ENCODE measurements at regions of chr17 and their contacts with region 1.

Region 1: GRCh38 chr17:76397687-76398487 is 13.5 kb downstream of the SPHK1 start:
- DNase-seq: peak; percentile 85
- ATAC-seq: peak; percentile 95
- H3K4me3 ChIP-seq: no peak overlapping the region
- H3K4me3 Mint-ChIP-seq: no peak overlapping the region
- H3K27ac ChIP-seq: no peak overlapping the region
- H3K27ac Mint-ChIP-seq: no peak overlapping the region
- H3K4me1 ChIP-seq: no peaks in the 10 kb centered on the region
- H3K4me1 Mint-ChIP-seq: no peaks in the 10 kb centered on the region
- H3K27me3 ChIP-seq: no peaks in the 10 kb centered on the region
- H3K27me3 Mint-ChIP-seq: no peaks in the 10 kb centered on the region
- CTCF ChIP-seq: peak; percentile 97

Region 2: GRCh38 chr17:76331083-76331482 is 66.8 kb before region 1 on chr17:
- CTCF ChIA-PET with region 1: interaction called, 10 read pairs
- POLR2A ChIA-PET with region 1: no interaction called
- intact Hi-C with region 1: no loop called
- DNase-seq: no peak
- ATAC-seq: no peak
- H3K4me3 ChIP-seq: no peak overlapping the region
- H3K4me3 Mint-ChIP-seq: no peak overlapping the region
- H3K27ac ChIP-seq: no peak overlapping the region
- H3K27ac Mint-ChIP-seq: no peak overlapping the region
- H3K4me1 ChIP-seq: no peaks in the 10 kb centered on the region
- H3K4me1 Mint-ChIP-seq: no peaks in the 10 kb centered on the region
- H3K27me3 ChIP-seq: no peaks in the 10 kb centered on the region
- H3K27me3 Mint-ChIP-seq: no peaks in the 10 kb centered on the region
- CTCF ChIP-seq: no peak

Region 3: GRCh38 chr17:76365256-76365903 is 32.5 kb before region 1 on chr17:
- CTCF ChIA-PET with region 1: interaction called, 20 read pairs
- POLR2A ChIA-PET with region 1: no interaction called
- intact Hi-C with region 1: no loop called
- DNase-seq: peak; percentile 18
- ATAC-seq: no peak
- H3K4me3 ChIP-seq: no peak overlapping the region
- H3K4me3 Mint-ChIP-seq: no peak overlapping the region
- H3K27ac ChIP-seq: no peak overlapping the region
- H3K27ac Mint-ChIP-seq: no peak overlapping the region
- H3K4me1 ChIP-seq: no peaks in the 10 kb centered on the region
- H3K4me1 Mint-ChIP-seq: no peaks in the 10 kb centered on the region
- H3K27me3 ChIP-seq: peaks cover 0 to 6% (median 0%) of the 10 kb centered on the region in 4 experiments
- H3K27me3 Mint-ChIP-seq: peaks cover 2% of the 10 kb centered on the region
- CTCF ChIP-seq: no peak

Region 4: GRCh38 chr17:76384222-76384986 is 13.5 kb before region 1 on chr17 and contains the start of gene SPHK1:
- CTCF ChIA-PET with region 1: interaction called, 94 read pairs
- POLR2A ChIA-PET with region 1: interaction called, 6 read pairs
- intact Hi-C with region 1: no loop called
- DNase-seq: peak; percentile 81
- ATAC-seq: peak; percentile 76
- H3K4me3 ChIP-seq: peak within 1 kb of the TSS; percentile 40 to 71 (median 58)
- H3K4me3 Mint-ChIP-seq: peak within 1 kb of the TSS; percentile 84
- H3K27ac ChIP-seq: no peak within 1 kb of the TSS
- H3K27ac Mint-ChIP-seq: peak within 1 kb of the TSS; percentile 78
- H3K4me1 ChIP-seq: peaks cover 26 to 29% of the 10 kb centered on the region in 2 donors
- H3K4me1 Mint-ChIP-seq: peaks cover 17% of the 10 kb centered on the region
- H3K27me3 ChIP-seq: peaks cover 0 to 24% (median 8%) of the 10 kb centered on the region in 4 experiments
- H3K27me3 Mint-ChIP-seq: peaks cover 7% of the 10 kb centered on the region
- CTCF ChIP-seq: no peak
- total RNA-seq, gene SPHK1: 2.2 and 2.4 TPM in 2 replicates

Region 5: GRCh38 chr17:76458580-76459490 is 60.9 kb after region 1 on chr17:
- CTCF ChIA-PET with region 1: interaction called, 265 read pairs
- POLR2A ChIA-PET with region 1: no interaction called
- intact Hi-C with region 1: no loop called
- DNase-seq: peak; percentile 68
- ATAC-seq: peak; percentile 80
- H3K4me3 ChIP-seq: no peak overlapping the region
- H3K4me3 Mint-ChIP-seq: no peak overlapping the region
- H3K27ac ChIP-seq: no peak overlapping the region
- H3K27ac Mint-ChIP-seq: no peak overlapping the region
- H3K4me1 ChIP-seq: no peaks in the 10 kb centered on the region
- H3K4me1 Mint-ChIP-seq: no peaks in the 10 kb centered on the region
- H3K27me3 ChIP-seq: peaks cover 0 to 3% (median 0%) of the 10 kb centered on the region in 4 experiments
- H3K27me3 Mint-ChIP-seq: no peaks in the 10 kb centered on the region
- CTCF ChIP-seq: peak; percentile 21

Region 6: GRCh38 chr17:76515274-76515949 is 117.5 kb after region 1 on chr17:
- CTCF ChIA-PET with region 1: interaction called, 11 read pairs
- POLR2A ChIA-PET with region 1: no interaction called
- intact Hi-C with region 1: no loop called
- DNase-seq: peak; percentile 93
- ATAC-seq: peak; percentile 87
- H3K4me3 ChIP-seq: peak overlapping the region in 4 of 5 experiments; percentile 21 to 38 (median 26)
- H3K4me3 Mint-ChIP-seq: peak overlapping the region; percentile 85
- H3K27ac ChIP-seq: peak overlapping the region; percentile 71 to 84
- H3K27ac Mint-ChIP-seq: peak overlapping the region; percentile 98
- H3K4me1 ChIP-seq: peaks cover 17 to 18% of the 10 kb centered on the region in 2 donors
- H3K4me1 Mint-ChIP-seq: peaks cover 31% of the 10 kb centered on the region
- H3K27me3 ChIP-seq: peaks cover 0 to 1% (median 0%) of the 10 kb centered on the region in 4 experiments
- H3K27me3 Mint-ChIP-seq: no peaks in the 10 kb centered on the region
- CTCF ChIP-seq: no peak